ENCODE measurements at regions of chr1 and their contacts with region 1.

Region 1: GRCh38 chr1:232886271-232886670 is 64.1 kb upstream of the NTPCR start:
- DNase-seq: no peak
- H3K4me3 ChIP-seq: no peak overlapping the region
- CTCF ChIP-seq: no peak
- POLR2A ChIP-seq: no peak

Region 2: DNA sequence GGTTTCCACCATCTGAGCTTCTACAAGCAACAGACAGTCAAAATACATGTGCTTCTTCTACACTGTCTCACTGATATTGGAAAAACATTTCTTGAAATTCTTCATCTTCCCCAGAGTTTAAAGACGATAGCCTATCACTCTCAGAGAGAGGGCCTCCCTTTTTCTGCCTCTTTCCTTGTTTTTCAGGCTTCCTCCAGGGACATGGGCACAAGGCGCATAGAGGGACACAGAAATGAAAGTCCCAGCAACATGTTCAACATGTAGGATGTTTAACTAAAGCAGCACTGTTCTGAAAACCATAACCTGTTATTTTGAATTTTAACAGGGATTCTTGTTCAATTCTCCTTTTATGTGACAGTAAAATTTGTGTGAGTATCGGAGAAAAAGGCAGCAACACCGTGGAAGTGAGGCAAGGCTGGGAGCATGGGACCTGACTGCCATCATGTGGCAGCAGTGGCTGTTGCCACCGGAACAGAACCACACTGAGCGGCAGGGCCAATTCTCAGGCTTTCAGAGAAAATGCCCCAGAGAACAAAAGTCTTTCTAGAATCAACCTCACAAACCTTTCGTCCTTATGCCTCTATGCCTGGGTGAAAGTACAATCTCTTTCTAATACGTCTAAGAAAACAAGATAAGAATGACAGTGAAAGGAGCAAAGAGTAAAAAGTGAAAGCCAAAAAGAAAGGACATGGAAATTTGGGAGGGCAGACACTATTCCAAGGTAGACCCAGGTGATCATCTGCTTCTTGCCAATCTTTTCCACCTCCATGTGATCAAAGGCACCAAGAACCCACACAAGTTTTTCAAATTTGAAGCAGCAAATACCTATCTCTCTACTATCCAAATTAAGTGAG is 354.8 kb after region 1 on chr1:
- intact Hi-C with region 1: no loop called
- DNase-seq: peak; percentile 32 to 86
- H3K4me3 ChIP-seq: no peak overlapping the region
- CTCF ChIP-seq: peak in 1 of 3 donors; percentile 30
- POLR2A ChIP-seq: no peak

Region 3: GRCh38 chr1:234260578-234260977 is 1374.3 kb after region 1 on chr1:
- intact Hi-C with region 1: loop called (anchors 5 kb)
- DNase-seq: peak in 1 of 2 donors; percentile 12
- H3K4me3 ChIP-seq: no peak overlapping the region
- CTCF ChIP-seq: no peak
- POLR2A ChIP-seq: no peak